CD8-positive, alpha-beta T cell (primary cell): ENCODE measurements at regions of chr14 and their contacts with region 1.

Region 1: DNA sequence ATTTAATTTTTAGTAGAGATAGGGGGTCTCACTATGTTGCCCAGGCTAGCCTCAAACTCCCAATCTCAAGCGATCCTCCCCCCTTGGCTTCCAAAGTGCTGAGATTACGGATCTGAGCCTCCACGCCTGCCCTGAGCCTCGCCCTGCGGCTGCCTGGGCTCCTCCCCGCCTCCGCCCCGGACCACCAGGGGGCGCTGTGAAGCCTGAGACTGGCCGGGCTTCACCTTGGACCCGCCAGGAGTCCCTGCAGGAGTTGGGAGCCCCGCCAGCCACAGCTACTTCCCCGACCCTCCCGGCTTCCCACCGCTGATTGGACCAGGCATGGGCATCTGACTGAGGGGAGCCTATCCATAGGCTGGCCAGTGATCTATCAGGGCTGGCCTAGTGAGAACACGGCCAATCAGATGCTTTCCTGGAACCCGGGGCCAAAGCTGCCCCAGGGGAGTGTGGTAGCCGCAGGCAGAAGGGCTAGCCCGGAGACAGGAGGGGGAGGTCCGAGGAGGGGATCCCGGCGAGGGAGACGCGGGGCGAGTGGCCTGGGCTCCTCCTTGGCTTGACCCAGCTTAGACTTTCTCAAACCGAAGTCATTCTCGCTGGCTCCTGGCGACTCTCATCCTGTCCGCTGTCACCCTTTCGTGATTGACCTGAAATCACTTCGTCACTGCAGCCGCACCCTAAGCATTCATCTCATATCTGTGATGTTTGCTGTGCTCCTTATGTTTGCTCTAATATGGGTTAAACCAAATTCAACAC is 15.1 kb upstream of the ANKRD9 start:
- DNase-seq: peak; percentile 81 to 97 (median 90)
- ATAC-seq: peak; percentile 79
- H3K4me3 ChIP-seq: peak overlapping the region; percentile 69 to 84
- H3K4me3 Mint-ChIP-seq: peak overlapping the region; percentile 85
- H3K27ac ChIP-seq: peak overlapping the region; percentile 35 to 83
- H3K27ac Mint-ChIP-seq: peak overlapping the region; percentile 61
- H3K4me1 ChIP-seq: peaks cover 20% of the 10 kb centered on the region
- H3K4me1 Mint-ChIP-seq: peaks cover 26% of the 10 kb centered on the region
- H3K27me3 ChIP-seq: no peaks in the 10 kb centered on the region
- H3K27me3 Mint-ChIP-seq: no peaks in the 10 kb centered on the region
- CTCF ChIP-seq: peak; percentile 96

Region 2: DNA sequence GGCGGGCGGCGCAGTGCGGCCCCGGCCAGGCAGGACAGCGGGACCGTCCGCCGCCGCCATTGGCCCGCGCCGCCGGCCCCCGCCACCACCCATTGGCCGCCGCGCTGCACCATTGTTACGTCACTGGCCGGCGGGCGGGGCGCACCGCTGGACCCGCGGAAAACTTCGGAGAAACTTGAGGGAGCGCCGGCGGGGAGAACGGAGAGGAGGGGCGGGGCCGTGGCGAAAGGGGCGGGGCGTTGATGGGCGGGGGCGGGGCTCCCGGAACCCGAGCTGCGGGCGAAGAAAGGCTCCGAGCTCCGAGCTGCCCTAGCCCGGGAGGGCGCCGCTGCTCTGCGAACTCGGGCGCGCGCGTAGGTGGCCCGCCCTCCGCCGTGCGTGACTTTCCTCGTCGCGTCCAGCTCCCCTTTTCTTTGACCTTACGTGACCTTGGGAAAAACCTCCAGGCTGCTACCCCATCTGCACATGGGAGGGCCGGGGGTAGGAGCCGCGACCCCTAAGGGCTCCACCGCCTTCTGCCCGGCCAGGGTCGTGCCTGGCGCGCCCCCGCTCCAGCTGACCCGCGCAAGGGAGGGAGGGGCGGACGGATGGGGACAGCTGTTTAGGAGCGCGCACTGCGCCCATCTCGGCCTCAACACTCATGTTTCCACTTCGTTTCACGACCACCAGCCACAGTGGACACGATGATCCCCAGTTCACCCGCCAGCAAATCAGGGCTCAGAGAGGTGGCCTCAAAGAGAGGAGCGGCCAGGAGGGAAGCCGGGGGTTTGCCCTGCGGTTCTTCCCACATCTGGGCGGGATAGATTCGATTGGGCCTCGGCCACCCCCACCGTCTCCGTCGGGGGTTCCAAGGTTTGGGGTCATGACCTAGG is 14.7 kb before region 1 on chr14 and contains the start of gene ANKRD9:
- CTCF ChIA-PET with region 1: interaction called, 18 read pairs
- POLR2A ChIA-PET with region 1: no interaction called
- intact Hi-C with region 1: loop called in 1 of 2 experiments (anchors 2 kb)
- DNase-seq: peak; percentile 57 to 91 (median 83)
- ATAC-seq: peak; percentile 86
- H3K4me3 ChIP-seq: peak within 1 kb of the TSS; percentile 78 to 96
- H3K4me3 Mint-ChIP-seq: peak within 1 kb of the TSS; percentile 86
- H3K27ac ChIP-seq: peak within 1 kb of the TSS; percentile 48 to 50
- H3K27ac Mint-ChIP-seq: peak within 1 kb of the TSS; percentile 64
- H3K4me1 ChIP-seq: peaks cover 16% of the 10 kb centered on the region
- H3K4me1 Mint-ChIP-seq: peaks cover 9% of the 10 kb centered on the region
- H3K27me3 ChIP-seq: no peaks in the 10 kb centered on the region
- H3K27me3 Mint-ChIP-seq: no peaks in the 10 kb centered on the region
- CTCF ChIP-seq: no peak
- total RNA-seq, gene ANKRD9: 4.7 to 5.0 TPM

Region 3: GRCh38 chr14:102555264-102555831 is 30.7 kb after region 1 on chr14:
- CTCF ChIA-PET with region 1: interaction called, 6 read pairs
- POLR2A ChIA-PET with region 1: no interaction called
- intact Hi-C with region 1: loop called in 1 of 2 experiments (anchors 2 kb)
- DNase-seq: peak; percentile 35 to 79 (median 60)
- ATAC-seq: peak; percentile 92
- H3K4me3 ChIP-seq: peak overlapping the region; percentile 62 to 80
- H3K4me3 Mint-ChIP-seq: peak overlapping the region; percentile 79
- H3K27ac ChIP-seq: peak overlapping the region; percentile 74 to 83
- H3K27ac Mint-ChIP-seq: peak overlapping the region; percentile 82
- H3K4me1 ChIP-seq: peaks cover 4% of the 10 kb centered on the region
- H3K4me1 Mint-ChIP-seq: peaks cover 3% of the 10 kb centered on the region
- H3K27me3 ChIP-seq: no peaks in the 10 kb centered on the region
- H3K27me3 Mint-ChIP-seq: peaks cover under 1% of the 10 kb centered on the region
- CTCF ChIP-seq: no peak

Region 4: GRCh38 chr14:102917469-102918211 is 393.0 kb after region 1 on chr14:
- CTCF ChIA-PET with region 1: no interaction called
- POLR2A ChIA-PET with region 1: no interaction called
- intact Hi-C with region 1: loop called (anchors 5 to 10 kb)
- DNase-seq: peak; percentile 45 to 79 (median 65)
- ATAC-seq: peak; percentile 74
- H3K4me3 ChIP-seq: no peak overlapping the region
- H3K4me3 Mint-ChIP-seq: no peak overlapping the region
- H3K27ac ChIP-seq: no peak overlapping the region
- H3K27ac Mint-ChIP-seq: no peak overlapping the region
- H3K4me1 ChIP-seq: peaks cover under 1% of the 10 kb centered on the region
- H3K4me1 Mint-ChIP-seq: no peaks in the 10 kb centered on the region
- H3K27me3 ChIP-seq: peaks cover 0 to 3% of the 10 kb centered on the region in 2 experiments
- H3K27me3 Mint-ChIP-seq: no peaks in the 10 kb centered on the region
- CTCF ChIP-seq: peak; percentile 46

Region 5: GRCh38 chr14:103974575-103974974 is 1449.9 kb after region 1 on chr14:
- CTCF ChIA-PET with region 1: no interaction called
- POLR2A ChIA-PET with region 1: no interaction called
- intact Hi-C with region 1: no loop called
- DNase-seq: no peak
- ATAC-seq: no peak
- H3K4me3 ChIP-seq: no peak overlapping the region
- H3K4me3 Mint-ChIP-seq: no peak overlapping the region
- H3K27ac ChIP-seq: no peak overlapping the region
- H3K27ac Mint-ChIP-seq: no peak overlapping the region
- H3K4me1 ChIP-seq: no peaks in the 10 kb centered on the region
- H3K4me1 Mint-ChIP-seq: no peaks in the 10 kb centered on the region
- H3K27me3 ChIP-seq: no peaks in the 10 kb centered on the region
- H3K27me3 Mint-ChIP-seq: peaks cover 2% of the 10 kb centered on the region
- CTCF ChIP-seq: no peak